IMR-90 (cell line): ENCODE measurements at regions of chr15 and their contacts with region 1.

Region 1: DNA sequence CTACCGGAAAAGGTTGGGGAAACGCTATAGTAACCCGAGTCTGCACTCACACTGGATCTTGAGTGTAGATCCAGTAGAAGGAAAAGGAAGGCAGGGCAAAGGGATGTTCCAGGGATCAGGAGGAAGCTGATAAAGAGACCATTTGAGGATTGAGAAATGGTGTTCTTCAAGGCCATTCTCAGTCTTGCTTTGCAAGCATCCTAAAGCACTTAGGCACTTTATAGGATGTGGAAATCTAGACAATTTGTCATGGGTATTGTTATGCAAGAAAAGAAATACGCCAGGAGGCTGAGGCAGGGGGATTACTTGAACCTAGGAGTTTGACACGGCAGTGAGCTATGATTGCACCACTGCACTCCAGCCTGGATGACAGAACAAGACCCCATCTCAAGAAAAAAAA is 13.2 kb upstream of the SCAMP5 start:
- DNase-seq: no peak
- ATAC-seq: no peak
- H3K4me3 ChIP-seq: no peak overlapping the region
- H3K27ac ChIP-seq: no peak overlapping the region
- H3K4me1 ChIP-seq: peaks cover 2% of the 10 kb centered on the region; the same call in 1 of the 2 replicates
- H3K27me3 ChIP-seq: peaks cover 20% of the 10 kb centered on the region
- CTCF ChIP-seq: no peak
- POLR2A ChIP-seq: no peak
- RAD21 ChIP-seq: no peak

Region 2: GRCh38 chr15:74828835-74829234 is 153.3 kb before region 1 on chr15:
- CTCF ChIA-PET with region 1: no interaction called
- POLR2A ChIA-PET with region 1: interaction called, 13 read pairs
- dilution Hi-C with region 1: no loop called
- in situ Hi-C with region 1: no loop called
- intact Hi-C with region 1: no loop called
- DNase-seq: no peak
- ATAC-seq: no peak
- H3K4me3 ChIP-seq: no peak overlapping the region
- H3K27ac ChIP-seq: no peak overlapping the region
- H3K4me1 ChIP-seq: no peaks in the 10 kb centered on the region
- H3K27me3 ChIP-seq: peaks cover 47% of the 10 kb centered on the region
- CTCF ChIP-seq: no peak
- POLR2A ChIP-seq: no peak
- RAD21 ChIP-seq: no peak

Region 3: DNA sequence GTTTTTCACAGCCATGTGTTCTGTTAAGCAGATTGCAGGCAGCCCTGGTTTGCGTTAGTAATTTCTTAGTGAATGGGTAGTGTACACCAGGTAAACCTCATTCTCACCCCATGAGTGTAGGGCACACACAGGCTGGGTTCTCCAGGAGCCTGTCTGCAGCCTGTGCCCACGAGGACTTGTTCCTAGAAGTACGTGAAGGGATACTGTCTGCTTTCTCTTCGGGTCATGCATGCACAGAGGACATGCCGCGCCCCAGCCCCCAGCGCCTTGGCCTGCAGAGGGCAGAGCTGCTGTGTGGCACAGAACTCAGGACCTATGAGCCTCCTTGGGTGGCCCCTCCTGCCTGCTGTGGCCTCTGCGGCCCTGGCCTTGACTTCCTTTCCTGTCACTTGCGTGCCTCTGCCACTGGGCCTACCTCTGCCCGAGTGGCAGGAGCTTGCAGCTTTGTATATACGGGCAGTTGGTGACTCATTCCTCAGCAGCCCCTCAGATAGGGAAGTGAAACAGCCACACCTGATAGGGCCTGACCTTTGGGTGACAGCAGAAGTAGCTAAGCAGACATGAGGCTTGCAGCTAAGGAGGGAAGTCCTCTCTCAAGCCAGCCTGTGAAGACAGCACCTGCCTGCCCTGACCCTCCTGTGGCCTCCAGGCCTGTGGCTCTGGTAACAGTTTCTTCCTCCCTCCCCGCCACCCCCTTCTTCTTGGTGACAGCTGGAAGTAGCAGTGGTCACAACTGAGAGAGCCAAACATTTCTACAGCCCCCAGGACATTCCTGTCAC is 60.7 kb after region 1 on chr15:
- CTCF ChIA-PET with region 1: no interaction called
- POLR2A ChIA-PET with region 1: no interaction called
- dilution Hi-C with region 1: no loop called
- in situ Hi-C with region 1: no loop called
- intact Hi-C with region 1: no loop called
- DNase-seq: peak; percentile 64
- ATAC-seq: peak; percentile 5
- H3K4me3 ChIP-seq: no peak overlapping the region
- H3K27ac ChIP-seq: peak overlapping the region; percentile 74
- H3K4me1 ChIP-seq: peaks cover 28% of the 10 kb centered on the region
- H3K27me3 ChIP-seq: no peaks in the 10 kb centered on the region
- CTCF ChIP-seq: peak; percentile 34
- POLR2A ChIP-seq: no peak
- RAD21 ChIP-seq: peak; percentile 40